ENCODE measurements at regions of chr3 and their contacts with region 1.

Region 1: DNA sequence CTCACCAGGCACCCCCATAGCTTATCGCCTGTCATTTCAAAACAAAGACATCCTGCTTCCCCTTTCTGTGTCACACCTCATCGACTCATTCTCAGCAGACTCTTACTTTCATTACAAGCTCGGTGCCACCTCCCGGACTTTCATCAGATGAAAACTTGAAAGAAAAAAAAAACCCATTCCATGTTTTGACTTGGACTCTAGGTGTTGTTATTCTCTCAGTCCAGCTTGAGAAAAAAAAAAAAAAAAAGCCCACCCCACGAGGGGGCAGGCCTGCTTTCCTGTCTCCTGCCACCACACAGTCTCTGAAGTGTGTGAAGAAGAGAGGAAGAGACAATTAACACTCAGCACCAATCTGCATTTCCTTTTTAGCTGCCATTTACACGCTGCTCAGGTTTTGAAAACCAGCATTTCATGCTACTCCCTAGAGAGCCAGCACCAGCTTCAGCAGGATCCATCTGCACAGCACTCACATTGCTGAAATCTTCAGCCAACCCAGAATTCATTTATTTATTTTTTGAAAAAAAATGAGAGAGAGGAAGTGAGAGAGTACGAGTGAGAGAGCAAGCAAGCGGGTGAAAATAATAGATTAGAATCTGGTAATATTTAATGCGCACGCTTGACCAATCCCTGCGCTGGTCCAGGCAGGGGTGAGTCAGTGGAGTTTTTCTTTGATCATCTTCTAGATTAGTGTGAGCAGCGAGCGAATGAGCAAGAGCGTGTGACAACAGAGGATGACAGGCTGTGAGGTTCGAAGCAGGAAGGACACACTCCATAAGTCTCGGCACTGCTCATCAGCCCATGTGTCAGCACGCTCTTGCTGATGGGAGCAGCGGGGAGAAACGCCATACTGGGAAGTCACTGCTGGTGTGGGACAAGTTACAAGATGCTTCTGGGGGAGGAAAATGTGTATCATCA is 23.5 kb downstream of the ZNF80 start:
- DNase-seq: peak; percentile 61 to 89 (median 80)
- H3K4me3 ChIP-seq: peak overlapping the region; percentile 61
- H3K4me3 Mint-ChIP-seq: no peak overlapping the region
- H3K27ac ChIP-seq: peak overlapping the region; percentile 90
- H3K27ac Mint-ChIP-seq: no peak overlapping the region
- H3K4me1 ChIP-seq: peaks cover 67% of the 10 kb centered on the region
- H3K4me1 Mint-ChIP-seq: peaks cover 0 to 6% (median 0%) of the 10 kb centered on the region in 3 donors
- H3K27me3 ChIP-seq: no peaks in the 10 kb centered on the region
- H3K27me3 Mint-ChIP-seq: no peaks in the 10 kb centered on the region

Region 2: DNA sequence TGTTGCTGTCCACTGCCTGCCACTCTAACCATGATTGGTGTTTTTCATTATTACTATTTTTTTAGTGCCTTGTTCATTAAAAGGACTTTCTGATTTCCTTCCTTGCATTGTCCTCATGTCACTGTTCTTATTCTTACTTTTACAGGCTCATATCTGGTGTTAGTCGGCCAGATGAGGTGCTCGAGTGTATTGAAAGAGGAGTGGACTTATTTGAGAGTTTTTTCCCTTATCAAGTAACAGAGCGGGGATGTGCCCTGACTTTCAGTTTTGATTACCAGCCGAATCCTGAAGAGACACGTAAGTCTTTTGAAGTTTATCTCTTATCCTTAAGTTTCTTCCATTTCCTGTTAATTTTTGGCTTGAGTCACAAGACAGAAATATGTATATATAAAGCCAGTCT is 134.1 kb before region 1 on chr3:
- CTCF ChIA-PET with region 1: no interaction called
- POLR2A ChIA-PET with region 1: no interaction called
- DNase-seq: no peak
- H3K4me3 ChIP-seq: no peak overlapping the region
- H3K4me3 Mint-ChIP-seq: no peak overlapping the region
- H3K27ac ChIP-seq: no peak overlapping the region
- H3K27ac Mint-ChIP-seq: peak overlapping the region in 1 of 8 donors; percentile 51
- H3K4me1 ChIP-seq: no peaks in the 10 kb centered on the region
- H3K4me1 Mint-ChIP-seq: no peaks in the 10 kb centered on the region
- H3K27me3 ChIP-seq: no peaks in the 10 kb centered on the region
- H3K27me3 Mint-ChIP-seq: no peaks in the 10 kb centered on the region

Region 3: DNA sequence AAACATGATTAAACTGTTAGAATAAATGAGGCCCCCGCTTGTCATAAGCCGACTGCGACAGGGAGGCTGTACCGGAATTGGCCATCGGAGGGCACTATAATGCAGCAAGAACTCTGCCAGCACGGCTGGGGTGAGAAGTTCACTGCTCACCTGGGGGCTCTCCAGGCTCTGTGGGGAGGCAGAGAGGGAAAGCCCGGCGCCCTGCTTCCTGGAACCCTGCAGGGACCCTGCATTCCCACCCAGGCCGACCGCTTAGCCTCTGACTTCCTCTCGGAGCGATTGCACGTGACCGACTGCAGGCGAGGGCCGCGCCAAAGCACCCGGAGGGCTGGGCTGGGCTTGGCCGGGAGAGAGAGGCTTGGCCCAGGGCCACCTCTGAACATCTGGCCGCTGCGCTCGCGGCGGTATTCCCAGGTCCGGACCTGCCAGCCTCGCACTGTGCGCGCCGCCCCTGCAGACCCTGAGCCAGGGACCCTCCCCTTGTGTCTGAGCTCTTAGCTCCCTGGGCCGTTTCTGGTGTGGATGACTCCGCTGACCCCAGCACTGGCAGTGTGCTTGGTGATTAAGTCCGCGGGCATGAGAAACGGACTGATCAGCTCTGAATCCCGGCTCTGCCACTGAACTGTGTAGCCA is 61.2 kb before region 1 on chr3:
- CTCF ChIA-PET with region 1: interaction called, 49 read pairs
- POLR2A ChIA-PET with region 1: interaction called, 5 read pairs
- DNase-seq: peak; percentile 74 to 89 (median 76)
- H3K4me3 ChIP-seq: peak overlapping the region; percentile 44
- H3K4me3 Mint-ChIP-seq: peak overlapping the region; percentile 56 to 89 (median 68)
- H3K27ac ChIP-seq: no peak overlapping the region
- H3K27ac Mint-ChIP-seq: peak overlapping the region in 6 of 8 donors; percentile 35 to 77 (median 46)
- H3K4me1 ChIP-seq: peaks cover 7% of the 10 kb centered on the region
- H3K4me1 Mint-ChIP-seq: peaks cover 10 to 19% (median 15%) of the 10 kb centered on the region in 3 donors
- H3K27me3 ChIP-seq: no peaks in the 10 kb centered on the region
- H3K27me3 Mint-ChIP-seq: no peaks in the 10 kb centered on the region

Region 4: DNA sequence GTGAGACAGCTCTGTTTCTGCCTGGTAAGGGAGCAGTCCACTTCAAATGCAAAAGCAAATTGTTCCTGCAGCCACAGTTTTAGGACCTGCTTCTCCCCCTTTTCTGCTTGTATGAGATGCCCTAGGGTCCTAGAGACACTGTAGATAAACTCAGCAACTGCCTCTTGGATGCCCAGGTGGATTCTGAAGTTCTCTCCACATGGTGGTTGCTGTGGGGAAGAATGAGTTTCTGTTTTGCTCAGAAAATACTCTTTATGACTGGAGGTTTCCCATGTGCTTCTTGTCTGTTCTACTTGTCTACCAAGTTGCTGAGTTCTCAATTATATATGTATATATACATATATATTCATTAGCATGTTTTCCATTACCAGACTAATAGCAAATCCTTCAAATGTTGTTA is 29.1 kb after region 1 on chr3:
- CTCF ChIA-PET with region 1: interaction called, 8 read pairs
- POLR2A ChIA-PET with region 1: interaction called, 62 read pairs
- DNase-seq: no peak
- H3K4me3 ChIP-seq: no peak overlapping the region
- H3K4me3 Mint-ChIP-seq: peak overlapping the region in 1 of 7 donors; percentile 25
- H3K27ac ChIP-seq: no peak overlapping the region
- H3K27ac Mint-ChIP-seq: no peak overlapping the region
- H3K4me1 ChIP-seq: no peaks in the 10 kb centered on the region
- H3K4me1 Mint-ChIP-seq: peaks cover 12 to 28% (median 27%) of the 10 kb centered on the region in 3 donors
- H3K27me3 ChIP-seq: no peaks in the 10 kb centered on the region
- H3K27me3 Mint-ChIP-seq: no peaks in the 10 kb centered on the region

Region 5: GRCh38 chr3:114299421-114299820 is 85.5 kb after region 1 on chr3:
- CTCF ChIA-PET with region 1: interaction called, 124 read pairs
- POLR2A ChIA-PET with region 1: interaction called, 119 read pairs
- DNase-seq: peak; percentile 20 to 72 (median 24)
- H3K4me3 ChIP-seq: peak overlapping the region; percentile 8
- H3K4me3 Mint-ChIP-seq: peak overlapping the region; percentile 82 to 87 (median 85)
- H3K27ac ChIP-seq: peak overlapping the region; percentile 29
- H3K27ac Mint-ChIP-seq: peak overlapping the region; percentile 70 to 96 (median 93)
- H3K4me1 ChIP-seq: peaks cover 8% of the 10 kb centered on the region
- H3K4me1 Mint-ChIP-seq: peaks cover 63 to 86% (median 82%) of the 10 kb centered on the region in 3 donors
- H3K27me3 ChIP-seq: no peaks in the 10 kb centered on the region
- H3K27me3 Mint-ChIP-seq: no peaks in the 10 kb centered on the region

Region 6: DNA sequence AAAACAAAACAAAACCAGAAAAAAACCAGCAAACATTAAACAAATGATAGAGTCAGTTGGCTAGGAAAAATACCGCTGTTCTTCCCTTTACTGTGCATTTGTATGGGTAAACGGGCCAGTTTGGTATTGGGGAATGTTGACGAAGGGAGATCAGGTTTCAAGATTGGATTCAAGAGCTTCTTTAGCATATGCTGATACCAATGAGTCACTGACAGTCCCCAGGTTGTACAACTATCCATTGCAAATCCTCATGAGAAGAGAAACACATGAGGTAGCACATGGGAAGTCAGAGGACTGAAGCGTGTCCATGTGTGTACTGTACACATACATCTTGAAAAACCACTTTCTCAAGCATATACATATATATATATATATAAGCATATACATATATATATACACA is 105.6 kb after region 1 on chr3:
- CTCF ChIA-PET with region 1: interaction called, 14 read pairs
- POLR2A ChIA-PET with region 1: interaction called, 4 read pairs
- DNase-seq: no peak
- H3K4me3 ChIP-seq: no peak overlapping the region
- H3K4me3 Mint-ChIP-seq: peak overlapping the region in 1 of 7 donors; percentile 53
- H3K27ac ChIP-seq: no peak overlapping the region
- H3K27ac Mint-ChIP-seq: peak overlapping the region in 6 of 8 donors; percentile 3 to 73 (median 42)
- H3K4me1 ChIP-seq: peaks cover 31% of the 10 kb centered on the region
- H3K4me1 Mint-ChIP-seq: peaks cover 79 to 98% (median 91%) of the 10 kb centered on the region in 3 donors
- H3K27me3 ChIP-seq: no peaks in the 10 kb centered on the region
- H3K27me3 Mint-ChIP-seq: peaks cover 0 to 2% of the 10 kb centered on the region in 2 donors

Measured in CD8-positive, alpha-beta memory T cell (primary cell).